ACHN (cell line): ENCODE measurements at regions of chr2 and their contacts with region 1.

Region 1: GRCh38 chr2:69559442-69560146 is 83.9 kb downstream of the AAK1 start:
- DNase-seq: peak; percentile 84

Region 2: DNA sequence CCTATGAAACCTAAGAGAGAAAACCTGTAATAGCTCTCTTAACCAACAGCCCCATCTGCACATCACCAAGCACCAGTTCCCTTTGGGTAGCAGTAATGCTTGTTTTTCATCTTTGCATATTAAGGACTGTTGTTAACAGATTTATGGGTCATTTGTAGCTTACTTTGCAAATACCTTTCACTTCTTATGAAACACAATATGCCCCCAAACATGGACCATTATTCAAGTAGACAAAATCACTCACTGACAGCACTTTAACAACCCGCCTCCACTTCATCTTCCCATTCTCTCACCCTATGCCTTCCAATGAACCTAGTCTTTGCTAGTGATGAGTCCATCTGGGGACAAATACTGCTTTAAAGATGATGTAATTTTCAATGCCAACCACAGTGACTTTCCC is 237.0 kb before region 1 on chr2:
- in situ Hi-C with region 1: no loop called
- DNase-seq: no peak

Region 3: GRCh38 chr2:69694894-69695849 is 135.6 kb after region 1 on chr2:
- in situ Hi-C with region 1: loop called (anchors 5 kb)
- DNase-seq: peak; percentile 83

Region 4: GRCh38 chr2:69753659-69754363 is 194.2 kb after region 1 on chr2:
- in situ Hi-C with region 1: no loop called
- DNase-seq: no peak

Region 5: GRCh38 chr2:69848201-69848770 is 288.7 kb after region 1 on chr2:
- in situ Hi-C with region 1: no loop called
- DNase-seq: no peak